Activated CD4-positive, alpha-beta memory T cell treated with anti-CD3 and anti-CD28 coated beads for 36 hours (primary cell): ENCODE measurements at regions of chr2 and their contacts with region 1.

Region 1: DNA sequence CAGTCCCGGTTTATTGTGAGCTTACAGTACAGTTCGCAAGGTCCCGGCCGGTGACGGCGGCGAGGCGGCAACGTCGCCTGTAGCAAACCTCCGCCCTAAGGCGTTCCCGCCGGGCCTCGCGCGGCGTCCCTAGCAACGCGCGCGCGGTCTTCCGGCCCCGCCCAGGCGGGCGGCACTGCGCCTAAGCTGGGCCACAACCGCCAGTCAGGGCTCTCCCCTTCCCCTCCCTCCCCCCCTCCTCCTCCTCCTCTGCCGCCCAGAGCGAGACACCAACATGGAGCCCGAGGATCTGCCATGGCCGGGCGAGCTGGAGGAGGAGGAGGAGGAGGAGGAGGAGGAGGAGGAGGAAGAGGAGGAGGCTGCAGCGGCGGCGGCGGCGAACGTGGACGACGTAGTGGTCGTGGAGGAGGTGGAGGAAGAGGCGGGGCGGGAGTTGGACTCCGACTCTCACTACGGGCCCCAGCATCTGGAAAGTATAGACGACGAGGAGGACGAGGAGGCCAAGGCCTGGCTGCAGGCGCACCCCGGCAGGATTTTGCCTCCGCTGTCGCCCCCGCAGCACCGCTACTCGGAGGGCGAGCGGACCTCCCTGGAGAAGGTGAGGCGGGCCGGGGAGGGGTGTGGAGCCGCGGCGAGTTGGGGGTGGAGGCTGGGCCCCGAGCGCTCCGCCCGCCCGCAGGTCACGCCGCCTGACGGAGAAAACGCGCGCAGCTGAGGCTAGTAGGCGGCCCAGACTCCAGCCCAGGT is at the start of gene ALMS1:
- DNase-seq: peak; percentile 94
- H3K4me3 Mint-ChIP-seq: peak within 1 kb of the TSS; percentile 92
- H3K27ac Mint-ChIP-seq: peak within 1 kb of the TSS; percentile 82
- H3K4me1 Mint-ChIP-seq: peaks cover 26% of the 10 kb centered on the region
- H3K27me3 Mint-ChIP-seq: no peaks in the 10 kb centered on the region
- total RNA-seq, gene ALMS1: 20.4 to 22.7 TPM

Region 2: DNA sequence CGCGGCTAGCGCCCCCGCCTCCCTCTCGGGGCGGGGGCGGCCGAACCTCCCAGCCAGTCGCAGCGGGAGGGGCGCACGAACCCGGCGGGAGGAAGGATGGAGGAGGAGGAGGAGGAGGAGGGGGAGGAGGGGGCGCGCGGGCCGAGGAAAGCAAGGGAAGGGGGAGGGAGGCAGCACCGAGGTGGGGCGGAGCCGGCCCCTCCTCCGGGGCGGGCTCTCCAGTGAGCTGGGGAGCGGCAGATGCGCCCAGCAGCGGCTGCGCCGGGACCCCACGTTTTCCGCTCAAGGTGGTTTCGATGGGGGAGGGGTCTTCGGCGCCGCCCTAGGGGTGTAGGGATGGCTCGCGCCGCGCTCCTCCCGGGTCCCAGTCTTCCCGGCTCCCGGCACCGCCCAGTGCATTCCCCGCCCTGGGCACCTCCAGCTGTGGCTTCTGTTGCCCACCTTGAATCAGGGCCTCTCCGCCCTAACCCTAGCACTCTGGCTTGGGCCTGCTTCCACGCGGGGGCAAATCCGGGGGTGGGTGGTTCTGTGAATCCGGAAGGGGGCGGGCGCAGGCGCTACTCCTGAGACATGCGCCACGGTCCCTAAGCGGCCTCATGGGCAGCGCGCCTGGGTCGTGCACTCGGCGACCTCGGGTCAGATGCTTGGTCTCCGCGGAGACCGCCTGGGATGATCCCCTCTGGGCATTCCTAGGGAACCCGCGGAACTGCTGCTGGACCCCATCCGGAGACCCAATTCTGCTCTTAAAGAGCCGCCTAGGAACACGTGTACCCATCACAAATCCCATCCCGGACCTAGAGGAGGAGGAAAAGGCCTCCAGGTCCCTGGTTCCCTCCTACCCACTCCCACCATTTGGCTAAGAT is 101.2 kb before region 1 on chr2 and contains the start of gene FBXO41:
- CTCF ChIA-PET with region 1: interaction called, 6 read pairs
- POLR2A ChIA-PET with region 1: no interaction called
- intact Hi-C with region 1: loop called (anchors 2 kb)
- DNase-seq: peak; percentile 78
- H3K4me3 Mint-ChIP-seq: peak within 1 kb of the TSS; percentile 77
- H3K27ac Mint-ChIP-seq: peak within 1 kb of the TSS; percentile 70
- H3K4me1 Mint-ChIP-seq: peaks cover 10% of the 10 kb centered on the region
- H3K27me3 Mint-ChIP-seq: peaks cover 9% of the 10 kb centered on the region
- total RNA-seq, gene FBXO41: 15.2 to 15.6 TPM